Motor neuron (in vitro differentiated cells): ENCODE measurements at regions of chr2 and their contacts with region 1.

Region 1: DNA sequence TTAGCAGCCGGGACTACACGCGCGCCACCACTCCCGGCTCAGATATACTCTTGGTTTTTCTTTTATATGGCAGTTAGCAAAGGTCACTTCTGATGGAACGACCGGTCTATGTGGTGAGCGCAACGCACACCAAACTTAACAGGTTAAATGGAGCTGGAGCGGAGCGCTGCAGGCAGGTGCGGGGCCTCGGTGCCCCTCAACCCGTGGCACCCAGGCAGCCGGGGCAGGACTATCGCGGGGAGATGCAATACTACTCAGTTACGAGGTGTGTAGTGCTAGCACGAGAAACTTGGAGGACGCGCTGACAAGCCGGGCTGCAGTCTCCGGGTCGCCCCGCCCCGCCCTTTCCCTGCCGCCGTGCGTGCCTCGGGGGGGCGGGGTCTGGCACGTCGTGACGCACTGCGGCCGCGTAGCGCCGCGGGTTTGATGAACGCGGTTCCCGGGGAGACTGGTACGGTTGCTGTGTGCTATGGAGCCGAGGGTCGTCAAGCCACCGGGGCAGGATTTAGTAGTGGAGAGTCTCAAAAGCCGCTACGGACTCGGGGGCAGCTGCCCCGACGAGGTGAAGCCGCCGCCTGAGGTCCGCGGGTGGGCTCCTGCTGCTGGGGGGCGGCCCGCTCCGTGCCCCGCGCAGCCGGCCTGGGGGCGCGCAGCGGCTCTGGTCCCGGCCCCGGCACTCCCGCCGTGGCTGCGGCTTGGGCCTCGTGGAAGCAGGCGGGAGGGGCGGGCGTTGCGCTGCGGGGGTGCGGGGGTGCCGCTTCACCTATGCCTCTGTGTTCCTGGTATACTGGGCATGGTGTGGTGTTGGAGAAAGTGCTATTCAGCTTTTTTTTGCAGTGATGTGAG is at the start of gene CCDC138:
- ATAC-seq: peak; percentile 94 to 98 (median 95)
- H3K4me3 ChIP-seq: peak within 1 kb of the TSS; percentile 74 to 98 (median 90)
- H3K27ac ChIP-seq: peak within 1 kb of the TSS; percentile 67 to 84
- H3K4me1 ChIP-seq: peaks cover 0 to 6% of the 10 kb centered on the region in 2 donors
- total RNA-seq, gene CCDC138: 1.5 to 30.6 (median 14.4) TPM

Region 2: GRCh38 chr2:107197594-107198294 is 1588.8 kb before region 1 on chr2:
- in situ Hi-C with region 1: no loop called
- ATAC-seq: peak in 5 of 8 experiments; percentile 73 to 98 (median 92)
- H3K4me3 ChIP-seq: no peak overlapping the region
- H3K27ac ChIP-seq: peak overlapping the region in 1 of 2 donors; percentile 41
- H3K4me1 ChIP-seq: peaks cover 3 to 8% of the 10 kb centered on the region in 2 donors

Region 3: GRCh38 chr2:108884619-108885018 is 98.0 kb after region 1 on chr2:
- in situ Hi-C with region 1: loop called in 1 of 9 experiments (anchors 25 kb)
- ATAC-seq: peak in 1 of 8 experiments; percentile 43
- H3K4me3 ChIP-seq: no peak overlapping the region
- H3K27ac ChIP-seq: no peak overlapping the region
- H3K4me1 ChIP-seq: no peaks in the 10 kb centered on the region